ENCODE measurements at regions of chr7 and their contacts with region 1.

Region 1: DNA sequence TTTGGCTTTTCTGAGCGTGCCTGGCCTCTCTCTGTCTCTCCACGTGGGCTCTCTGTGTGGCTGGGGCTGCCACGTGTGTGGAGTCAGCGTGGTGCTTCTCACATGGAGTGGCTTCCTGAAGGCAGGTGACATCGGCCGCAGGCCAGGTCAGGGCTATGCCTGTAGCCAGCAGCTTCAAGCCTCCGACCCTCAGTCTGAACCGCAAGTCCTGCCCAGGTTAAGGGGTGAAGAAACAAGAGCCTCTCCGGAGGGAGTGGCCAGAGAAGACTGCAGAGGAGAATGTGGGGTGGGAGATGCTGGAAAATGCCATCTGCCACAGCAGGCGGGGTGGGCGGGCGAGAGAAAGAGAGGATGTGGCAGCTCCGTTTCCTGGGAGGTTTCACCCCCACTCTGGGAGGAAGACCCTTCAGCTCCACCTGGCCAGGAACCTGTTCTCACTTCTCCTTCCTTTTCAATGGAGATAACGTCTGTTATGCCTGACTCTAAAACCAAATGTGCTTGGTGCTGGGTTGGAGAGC is 14.3 kb upstream of the VIPR2 start:
- DNase-seq: no peak
- H3K4me3 ChIP-seq: no peak overlapping the region
- H3K27ac ChIP-seq: no peak overlapping the region
- H3K4me1 ChIP-seq: no peaks in the 10 kb centered on the region
- H3K27me3 ChIP-seq: peaks cover 28% of the 10 kb centered on the region
- CTCF ChIP-seq: no peak

Region 2: DNA sequence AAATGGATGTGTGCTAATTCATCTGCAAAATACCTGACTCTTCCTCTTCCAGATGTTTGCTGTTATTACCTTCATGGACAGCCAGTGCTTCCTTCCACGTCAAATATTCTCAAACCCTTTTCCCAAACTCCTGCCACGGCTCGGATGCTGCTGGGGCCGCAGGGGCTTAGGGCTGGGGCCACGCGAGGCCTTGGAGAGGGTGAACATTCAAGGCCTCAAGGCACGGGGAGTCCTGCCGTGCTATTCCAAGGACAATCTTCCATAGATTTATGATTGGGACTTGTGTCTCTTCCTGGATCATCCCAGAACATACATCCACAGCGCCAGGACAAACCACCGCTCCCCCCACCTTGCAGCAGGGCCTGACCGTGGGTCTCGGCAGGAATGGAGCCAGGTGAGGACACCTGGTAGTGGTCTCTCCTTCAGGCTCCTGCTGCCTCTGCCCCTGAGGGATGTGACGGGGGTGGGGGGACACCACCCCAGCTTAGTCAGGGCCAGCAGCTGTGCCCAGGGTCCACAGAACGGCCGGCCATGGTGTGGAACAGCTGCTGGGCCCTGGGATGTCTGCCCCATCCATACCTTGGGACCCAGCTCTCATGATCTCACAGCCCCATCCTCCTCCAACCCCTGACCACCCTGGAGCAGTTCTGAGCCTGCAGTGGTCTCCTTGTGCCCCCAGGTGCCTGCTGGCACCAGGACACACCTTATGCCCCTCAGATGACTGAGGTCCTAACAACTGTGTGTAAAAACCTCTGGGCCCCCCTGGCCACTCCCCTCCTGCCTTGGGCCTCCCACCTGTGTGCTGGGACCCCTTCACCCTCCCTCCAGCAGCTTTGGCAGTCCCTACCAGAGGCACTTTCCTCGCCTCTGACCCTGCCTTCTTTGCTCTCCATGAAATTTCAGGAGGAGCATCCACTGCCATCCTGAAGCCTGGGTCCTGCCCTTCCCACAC is 31.0 kb before region 1 on chr7:
- CTCF ChIA-PET with region 1: no interaction called
- POLR2A ChIA-PET with region 1: no interaction called
- intact Hi-C with region 1: loop called (anchors 1 kb)
- DNase-seq: no peak
- H3K4me3 ChIP-seq: no peak overlapping the region
- H3K27ac ChIP-seq: no peak overlapping the region
- H3K4me1 ChIP-seq: no peaks in the 10 kb centered on the region
- H3K27me3 ChIP-seq: peaks cover 31% of the 10 kb centered on the region
- CTCF ChIP-seq: no peak

Measured in A673 (cell line).